H1 (cell line): ENCODE measurements at regions of chr4 and their contacts with region 1.

Region 1: GRCh38 chr4:74133786-74134499 is 24.0 kb upstream of the MTHFD2L start:
- DNase-seq: peak; percentile 38 to 83
- H3K4me3 ChIP-seq: no peak overlapping the region
- H3K27ac ChIP-seq: no peak overlapping the region
- H3K4me1 ChIP-seq: peaks cover 0 to 6% (median 1%) of the 10 kb centered on the region in 4 experiments; a peak in 3 of 7 replicates
- H3K27me3 ChIP-seq: no peaks in the 10 kb centered on the region
- CTCF ChIP-seq: peak; percentile 26 to 85 (median 79)
- EP300 ChIP-seq: no peak
- POLR2A ChIP-seq: no peak
- RAD21 ChIP-seq: peak; percentile 95 to 97

Region 2: GRCh38 chr4:73341454-73341853 is 792.5 kb before region 1 on chr4:
- CTCF ChIA-PET with region 1: interaction called, 11 read pairs
- POLR2A ChIA-PET with region 1: no interaction called
- DNase-seq: peak in 1 of 2 experiments; percentile 53
- H3K4me3 ChIP-seq: no peak overlapping the region
- H3K27ac ChIP-seq: no peak overlapping the region
- H3K4me1 ChIP-seq: peaks cover 0 to 5% (median 1%) of the 10 kb centered on the region in 4 experiments; a peak in 4 of 7 replicates
- H3K27me3 ChIP-seq: no peaks in the 10 kb centered on the region
- CTCF ChIP-seq: peak in 2 of 3 experiments; percentile 90 to 95; a peak in 3 of 4 replicates
- EP300 ChIP-seq: no peak
- POLR2A ChIP-seq: no peak
- RAD21 ChIP-seq: peak; percentile 98 to 100

Region 3: DNA sequence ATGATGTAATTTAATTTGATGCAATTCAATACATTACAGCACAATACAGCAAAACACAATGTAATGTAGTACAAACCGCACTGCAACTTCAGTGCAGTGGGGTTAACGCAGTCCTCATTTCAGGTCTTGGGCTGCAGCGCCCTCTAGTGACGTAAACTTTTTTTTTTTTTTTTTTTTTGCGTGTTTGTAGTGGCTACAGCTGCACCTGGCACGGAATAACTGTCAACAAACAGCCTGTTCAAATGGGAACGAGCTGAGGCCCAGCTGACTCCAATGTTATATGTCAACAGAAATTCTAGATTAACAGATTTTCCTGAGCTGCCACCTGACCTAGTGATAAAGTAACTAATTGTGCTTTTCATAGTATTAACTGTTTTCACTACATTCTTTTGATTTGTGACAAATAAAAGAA is 480.2 kb before region 1 on chr4:
- CTCF ChIA-PET with region 1: interaction called, 25 read pairs
- POLR2A ChIA-PET with region 1: no interaction called
- DNase-seq: no peak
- H3K4me3 ChIP-seq: no peak overlapping the region
- H3K27ac ChIP-seq: no peak overlapping the region
- H3K4me1 ChIP-seq: no peaks in the 10 kb centered on the region
- H3K27me3 ChIP-seq: peaks cover 0 to 2% (median 0%) of the 10 kb centered on the region in 4 experiments; a peak in 1 of 7 replicates
- CTCF ChIP-seq: peak; percentile 17 to 70 (median 44)
- EP300 ChIP-seq: no peak
- POLR2A ChIP-seq: no peak
- RAD21 ChIP-seq: peak; percentile 89 to 90

Region 4: GRCh38 chr4:73668782-73669201 is 465.2 kb before region 1 on chr4:
- CTCF ChIA-PET with region 1: interaction called, 24 read pairs
- POLR2A ChIA-PET with region 1: no interaction called
- DNase-seq: no peak
- H3K4me3 ChIP-seq: no peak overlapping the region
- H3K27ac ChIP-seq: no peak overlapping the region
- H3K4me1 ChIP-seq: no peaks in the 10 kb centered on the region
- H3K27me3 ChIP-seq: no peaks in the 10 kb centered on the region
- CTCF ChIP-seq: no peak
- EP300 ChIP-seq: no peak
- POLR2A ChIP-seq: no peak
- RAD21 ChIP-seq: no peak

Region 5: GRCh38 chr4:73729534-73730165 is 404.3 kb before region 1 on chr4:
- CTCF ChIA-PET with region 1: interaction called, 30 read pairs
- POLR2A ChIA-PET with region 1: no interaction called
- DNase-seq: no peak
- H3K4me3 ChIP-seq: no peak overlapping the region
- H3K27ac ChIP-seq: no peak overlapping the region
- H3K4me1 ChIP-seq: peaks cover 0 to 2% (median 0%) of the 10 kb centered on the region in 4 experiments; a peak in 1 of 7 replicates
- H3K27me3 ChIP-seq: no peaks in the 10 kb centered on the region
- CTCF ChIP-seq: peak; percentile 62 to 86 (median 75)
- EP300 ChIP-seq: no peak
- POLR2A ChIP-seq: no peak
- RAD21 ChIP-seq: peak; percentile 65 to 80

Region 6: GRCh38 chr4:73869130-73870050 is 264.6 kb before region 1 on chr4 and contains the start of gene CXCL1:
- CTCF ChIA-PET with region 1: interaction called, 19 read pairs
- POLR2A ChIA-PET with region 1: no interaction called
- DNase-seq: peak in 1 of 2 experiments; percentile 70
- H3K4me3 ChIP-seq: peak within 1 kb of the TSS; percentile 30 to 76 (median 57)
- H3K27ac ChIP-seq: no peak within 1 kb of the TSS
- H3K4me1 ChIP-seq: peaks cover 0 to 4% (median 2%) of the 10 kb centered on the region in 4 experiments; a peak in 3 of 7 replicates
- H3K27me3 ChIP-seq: peaks cover 0 to 22% (median 11%) of the 10 kb centered on the region in 4 experiments; a peak in 6 of 7 replicates
- CTCF ChIP-seq: no peak
- EP300 ChIP-seq: no peak
- POLR2A ChIP-seq: no peak
- RAD21 ChIP-seq: no peak
- total RNA-seq, gene CXCL1: 0.69 and 0.80 TPM in 2 replicates

Region 7: GRCh38 chr4:73998040-73999011 is 135.6 kb before region 1 on chr4 and contains the start of gene CXCL5:
- CTCF ChIA-PET with region 1: interaction called, 14 read pairs
- POLR2A ChIA-PET with region 1: interaction called, 6 read pairs
- DNase-seq: peak; percentile 67 to 78
- H3K4me3 ChIP-seq: peak within 1 kb of the TSS; percentile 51 to 61 (median 56)
- H3K27ac ChIP-seq: peak within 1 kb of the TSS; percentile 76; the same call in 1 of the 2 replicates
- H3K4me1 ChIP-seq: peaks cover 0 to 8% (median 6%) of the 10 kb centered on the region in 4 experiments; a peak in 6 of 7 replicates
- H3K27me3 ChIP-seq: peaks cover 0 to 6% (median under 1%) of the 10 kb centered on the region in 4 experiments; a peak in 3 of 7 replicates
- CTCF ChIP-seq: peak; percentile 45 to 63 (median 58)
- EP300 ChIP-seq: peak in 1 of 2 experiments; percentile 52; a peak in 1 of 3 replicates
- POLR2A ChIP-seq: peak; percentile 3 to 8; a peak in 2 of 3 replicates
- RAD21 ChIP-seq: peak; percentile 72
- total RNA-seq, gene CXCL5: 10.9 and 11.4 TPM in 2 replicates

Region 8: GRCh38 chr4:74152836-74153235 is 18.9 kb after region 1 on chr4:
- CTCF ChIA-PET with region 1: no interaction called
- POLR2A ChIA-PET with region 1: no interaction called
- DNase-seq: no peak
- H3K4me3 ChIP-seq: no peak overlapping the region
- H3K27ac ChIP-seq: no peak overlapping the region
- H3K4me1 ChIP-seq: peaks cover 0 to 4% (median 0%) of the 10 kb centered on the region in 4 experiments; a peak in 1 of 7 replicates
- H3K27me3 ChIP-seq: no peaks in the 10 kb centered on the region
- CTCF ChIP-seq: no peak
- EP300 ChIP-seq: no peak
- POLR2A ChIP-seq: no peak
- RAD21 ChIP-seq: no peak

Region 9: GRCh38 chr4:74230902-74231499 is 97.1 kb after region 1 on chr4:
- CTCF ChIA-PET with region 1: no interaction called
- POLR2A ChIA-PET with region 1: no interaction called
- DNase-seq: no peak
- H3K4me3 ChIP-seq: no peak overlapping the region
- H3K27ac ChIP-seq: no peak overlapping the region
- H3K4me1 ChIP-seq: no peaks in the 10 kb centered on the region
- H3K27me3 ChIP-seq: no peaks in the 10 kb centered on the region
- CTCF ChIP-seq: no peak
- EP300 ChIP-seq: no peak
- POLR2A ChIP-seq: no peak
- RAD21 ChIP-seq: no peak